Psoas muscle (tissue), 8 donors: ENCODE measurements at regions of chr15 and their contacts with region 1.

Region 1: DNA sequence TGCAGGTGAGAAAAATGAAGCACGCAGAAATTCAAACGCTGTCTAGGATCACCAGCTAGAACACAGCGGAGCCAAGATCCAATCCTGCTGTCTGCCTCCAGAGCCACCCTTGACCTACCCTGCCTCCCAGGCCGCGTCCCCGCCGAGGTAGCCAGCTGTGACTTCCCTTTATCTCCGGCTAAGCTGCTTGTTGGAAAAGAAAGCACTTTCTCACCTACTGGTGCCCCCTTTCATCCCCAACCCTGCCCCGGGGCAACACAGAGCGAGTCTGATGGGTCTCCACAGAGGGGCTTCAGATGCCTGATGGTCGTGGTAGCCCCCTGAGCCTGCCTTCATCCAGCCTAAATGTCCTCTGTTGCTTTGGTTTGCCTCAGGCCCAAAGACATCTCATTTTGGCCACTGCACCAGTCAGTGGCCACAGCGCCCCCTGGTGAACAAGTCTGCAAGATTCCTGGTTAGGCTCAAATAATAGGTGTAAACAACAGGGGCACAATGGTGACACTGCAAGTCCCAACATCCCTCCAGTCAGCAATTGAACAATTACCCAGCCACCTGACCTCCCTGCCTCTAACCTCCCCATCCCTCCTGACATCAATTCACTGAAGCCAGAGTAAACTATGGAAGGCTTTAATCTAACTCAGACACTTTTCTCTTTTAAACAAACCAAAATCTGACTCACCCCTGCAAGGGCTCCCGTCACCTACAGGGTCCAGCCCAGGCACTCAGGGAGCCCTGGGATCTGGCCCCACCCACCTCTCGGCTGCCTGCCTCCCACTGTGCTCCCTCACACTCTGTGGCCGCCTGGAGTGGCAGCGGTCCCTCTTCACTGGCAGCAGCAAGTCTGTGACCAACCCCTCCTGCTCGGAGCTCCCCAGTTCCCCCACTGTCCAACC is 27.3 kb upstream of the BCL2L10 start:
- DNase-seq: peak; percentile 72 to 81
- ATAC-seq: peak; percentile 40 to 70 (median 60)
- H3K4me3 ChIP-seq: no peak overlapping the region
- H3K27ac ChIP-seq: no peak overlapping the region
- H3K4me1 ChIP-seq: no peaks in the 10 kb centered on the region
- H3K27me3 ChIP-seq: no peaks in the 10 kb centered on the region
- CTCF ChIP-seq: peak; percentile 71

Region 2: DNA sequence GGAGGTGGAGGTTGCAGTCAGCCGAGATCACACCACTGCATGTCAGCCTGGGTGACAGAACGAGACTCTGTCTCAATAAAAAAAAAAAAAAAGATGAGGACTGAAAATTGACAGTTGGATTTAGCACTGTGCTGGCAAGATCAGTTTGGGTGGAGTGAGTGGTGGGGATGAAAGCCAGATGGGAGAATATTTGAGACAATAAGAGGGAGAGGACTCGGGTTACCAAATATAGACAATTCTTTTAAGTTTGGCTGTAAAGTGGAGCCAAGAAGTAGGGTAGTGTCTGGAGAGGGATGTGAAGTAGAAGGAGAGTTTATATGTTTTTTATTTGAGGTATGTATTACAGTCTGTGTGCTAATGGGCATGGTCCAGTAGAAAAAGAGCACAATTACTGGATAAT is 290.0 kb before region 1 on chr15:
- intact Hi-C with region 1: no loop called
- DNase-seq: no peak
- ATAC-seq: no peak
- H3K4me3 ChIP-seq: no peak overlapping the region
- H3K27ac ChIP-seq: no peak overlapping the region
- H3K4me1 ChIP-seq: peaks cover 21% of the 10 kb centered on the region
- H3K27me3 ChIP-seq: no peaks in the 10 kb centered on the region
- CTCF ChIP-seq: no peak

Region 3: GRCh38 chr15:51971375-51972133 is 168.3 kb before region 1 on chr15 and contains the start of gene LEO1:
- intact Hi-C with region 1: loop called in 1 of 2 experiments (anchors 5 kb)
- DNase-seq: peak; percentile 87 to 92
- ATAC-seq: peak; percentile 96 to 98 (median 98)
- H3K4me3 ChIP-seq: peak within 1 kb of the TSS; percentile 100
- H3K27ac ChIP-seq: peak within 1 kb of the TSS; percentile 94
- H3K4me1 ChIP-seq: peaks cover 11% of the 10 kb centered on the region
- H3K27me3 ChIP-seq: no peaks in the 10 kb centered on the region
- CTCF ChIP-seq: peak; percentile 45
- total RNA-seq, gene LEO1: 6.2 to 10.2 (median 7.1) TPM

Region 4: GRCh38 chr15:52217186-52217585 is 77.3 kb after region 1 on chr15:
- intact Hi-C with region 1: no loop called
- DNase-seq: peak in 1 of 2 donors; percentile 60
- ATAC-seq: peak in 3 of 4 donors; percentile 44 to 92 (median 86)
- H3K4me3 ChIP-seq: no peak overlapping the region
- H3K27ac ChIP-seq: no peak overlapping the region
- H3K4me1 ChIP-seq: peaks cover 8% of the 10 kb centered on the region
- H3K27me3 ChIP-seq: no peaks in the 10 kb centered on the region
- CTCF ChIP-seq: no peak